Activated T-helper 1 cell treated with anti-CD3 and anti-CD28 coated beads, Interleukin-12 subunit alpha, Interleukin-12 subunit beta, Interleukin-2, Interleukin-4 antibody, amounts not matched to agents 30 ng/mL and 10 ng/mL and 1 ng/mL, durations not matched to agents 14 hours and 24 hours and 36 hours (primary cell): ENCODE measurements at regions of chr1 and their contacts with region 1.

Region 1: DNA sequence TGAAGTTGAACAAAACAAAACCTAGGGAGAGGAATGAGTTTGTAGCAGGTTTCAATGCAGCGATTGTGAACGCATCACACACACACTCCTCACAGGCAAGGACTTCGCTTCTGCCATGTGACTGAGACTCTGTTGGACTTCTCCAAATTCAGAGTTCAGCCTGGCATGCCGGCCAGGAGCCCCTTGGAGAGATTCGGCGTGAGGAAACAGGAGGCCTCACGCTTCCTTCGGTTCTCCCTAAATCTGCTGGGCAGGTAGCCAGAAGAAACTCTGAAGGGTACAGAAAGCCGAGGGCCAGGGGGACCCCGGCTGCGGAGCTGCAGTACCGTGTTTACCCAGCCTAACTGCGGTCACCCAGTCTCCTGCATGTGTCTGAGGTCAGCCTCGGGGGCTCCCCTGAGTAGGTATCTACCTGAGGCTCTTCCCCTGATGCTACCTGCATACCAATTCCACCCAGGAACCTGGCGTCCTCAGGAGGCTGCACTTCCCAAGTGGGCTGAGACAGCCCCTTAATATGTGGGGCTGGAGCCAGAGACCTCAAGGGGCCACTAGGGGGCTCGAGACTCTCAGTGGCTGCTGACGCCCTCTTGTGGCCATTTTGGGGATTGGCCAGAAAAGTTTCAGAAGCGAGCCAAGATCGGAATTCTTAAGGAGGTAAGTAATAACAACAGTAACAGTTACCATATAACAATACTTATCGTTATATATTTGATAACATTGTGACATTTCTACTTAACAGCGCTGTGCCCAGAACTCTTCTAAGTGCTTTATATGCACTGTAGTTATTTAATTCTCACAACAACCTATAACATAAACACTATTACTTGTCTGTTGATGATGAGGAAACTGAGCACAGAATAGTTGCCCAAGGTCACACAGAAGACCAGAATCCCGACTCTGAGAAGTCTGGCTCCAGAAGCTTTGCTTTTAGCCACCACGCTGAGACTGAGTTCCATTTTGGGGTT is 2.7 kb upstream of the ANXA9 start:
- DNase-seq: peak; percentile 80
- H3K4me3 Mint-ChIP-seq: no peak overlapping the region
- H3K27ac Mint-ChIP-seq: no peak overlapping the region
- H3K4me1 Mint-ChIP-seq: peaks cover 32% of the 10 kb centered on the region
- H3K27me3 Mint-ChIP-seq: no peaks in the 10 kb centered on the region

Region 2: GRCh38 chr1:150696590-150697524 is 282.5 kb before region 1 on chr1 and contains the start of gene GOLPH3L:
- intact Hi-C with region 1: loop called (anchors 1 kb)
- DNase-seq: peak; percentile 89
- H3K4me3 Mint-ChIP-seq: peak within 1 kb of the TSS; percentile 91
- H3K27ac Mint-ChIP-seq: peak within 1 kb of the TSS; percentile 85
- H3K4me1 Mint-ChIP-seq: peaks cover 33% of the 10 kb centered on the region
- H3K27me3 Mint-ChIP-seq: peaks cover 12% of the 10 kb centered on the region
- total RNA-seq, gene GOLPH3L: 19.1 and 20.5 TPM in 2 replicates

Region 3: GRCh38 chr1:150995896-150996295 is 16.5 kb after region 1 on chr1:
- intact Hi-C with region 1: loop called (anchors 1 kb)
- DNase-seq: peak; percentile 20
- H3K4me3 Mint-ChIP-seq: no peak overlapping the region
- H3K27ac Mint-ChIP-seq: no peak overlapping the region
- H3K4me1 Mint-ChIP-seq: peaks cover 8% of the 10 kb centered on the region
- H3K27me3 Mint-ChIP-seq: no peaks in the 10 kb centered on the region

Region 4: DNA sequence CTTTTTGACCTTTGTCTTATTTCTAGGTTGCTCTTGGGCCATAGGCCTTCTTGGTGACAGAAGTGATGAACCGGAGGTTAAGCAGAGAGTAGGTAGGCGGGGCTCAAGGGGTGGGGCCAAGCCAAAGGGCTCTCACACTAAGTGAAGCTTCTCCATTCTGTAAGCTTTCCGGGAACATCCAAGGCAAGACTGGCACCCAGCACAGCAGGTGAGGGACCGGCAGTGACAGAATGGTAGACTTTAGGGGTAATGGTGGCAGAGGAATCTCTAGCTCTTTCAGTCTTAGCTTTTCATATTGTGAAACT is 177.1 kb after region 1 on chr1 and contains the start of gene TNFAIP8L2:
- intact Hi-C with region 1: loop called (anchors 2 kb)
- DNase-seq: peak; percentile 72
- H3K4me3 Mint-ChIP-seq: peak within 1 kb of the TSS; percentile 92
- H3K27ac Mint-ChIP-seq: peak within 1 kb of the TSS; percentile 99
- H3K4me1 Mint-ChIP-seq: peaks cover 42% of the 10 kb centered on the region
- H3K27me3 Mint-ChIP-seq: no peaks in the 10 kb centered on the region
- total RNA-seq, gene TNFAIP8L2: 38.0 and 38.5 TPM in 2 replicates

Region 5: GRCh38 chr1:151198255-151199127 is 219.1 kb after region 1 on chr1 and contains the start of gene PIP5K1A:
- intact Hi-C with region 1: no loop called
- DNase-seq: peak; percentile 97
- H3K4me3 Mint-ChIP-seq: peak within 1 kb of the TSS; percentile 94
- H3K27ac Mint-ChIP-seq: peak within 1 kb of the TSS; percentile 94
- H3K4me1 Mint-ChIP-seq: peaks cover 35% of the 10 kb centered on the region
- H3K27me3 Mint-ChIP-seq: peaks cover 7% of the 10 kb centered on the region
- total RNA-seq, gene PIP5K1A: 98.9 and 101 TPM in 2 replicates

Region 6: DNA sequence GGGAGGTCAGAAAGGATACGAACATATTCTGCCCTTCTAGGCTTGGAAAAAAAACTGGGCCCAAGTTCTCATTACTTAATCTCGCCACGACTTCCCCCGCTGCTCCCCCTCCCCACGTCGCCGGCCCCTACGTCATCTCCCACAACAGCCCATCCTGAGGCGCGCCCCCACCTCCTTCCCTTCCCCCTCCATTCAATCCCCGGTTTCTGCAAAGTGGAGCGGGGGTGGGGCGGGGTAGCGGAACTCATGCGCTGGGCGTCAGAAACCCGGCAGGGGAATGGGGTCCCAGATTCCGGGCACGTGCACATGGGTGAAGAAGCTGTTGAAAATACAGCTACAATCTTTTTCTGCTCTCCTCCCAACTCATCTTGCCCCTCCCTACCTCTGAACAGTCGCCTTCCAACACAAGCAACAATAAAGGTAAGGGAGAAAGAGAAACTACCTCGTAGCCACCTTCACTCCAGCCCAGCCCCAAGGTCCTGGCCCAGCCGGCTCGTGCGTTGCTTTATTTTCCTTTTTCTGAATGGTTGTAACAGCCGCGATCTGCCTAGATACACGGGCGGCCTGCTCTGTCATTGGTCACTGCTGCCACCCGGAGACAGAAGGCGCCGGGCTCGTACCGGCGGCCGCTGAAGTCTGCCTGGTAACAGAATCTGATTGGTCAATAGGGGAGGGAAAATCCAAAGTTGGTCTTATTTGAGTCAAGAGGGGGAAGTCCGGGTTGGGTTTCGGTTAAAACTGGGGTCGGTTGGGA is 367.6 kb after region 1 on chr1 and contains the start of gene RFX5:
- intact Hi-C with region 1: no loop called
- DNase-seq: peak; percentile 95
- H3K4me3 Mint-ChIP-seq: peak within 1 kb of the TSS; percentile 95
- H3K27ac Mint-ChIP-seq: peak within 1 kb of the TSS; percentile 99
- H3K4me1 Mint-ChIP-seq: peaks cover 45% of the 10 kb centered on the region
- H3K27me3 Mint-ChIP-seq: no peaks in the 10 kb centered on the region
- total RNA-seq, gene RFX5: 78.1 and 83.4 TPM in 2 replicates